Tibial artery (tissue), 4 donors: ENCODE measurements at regions of chr11 and their contacts with region 1.

Region 1: DNA sequence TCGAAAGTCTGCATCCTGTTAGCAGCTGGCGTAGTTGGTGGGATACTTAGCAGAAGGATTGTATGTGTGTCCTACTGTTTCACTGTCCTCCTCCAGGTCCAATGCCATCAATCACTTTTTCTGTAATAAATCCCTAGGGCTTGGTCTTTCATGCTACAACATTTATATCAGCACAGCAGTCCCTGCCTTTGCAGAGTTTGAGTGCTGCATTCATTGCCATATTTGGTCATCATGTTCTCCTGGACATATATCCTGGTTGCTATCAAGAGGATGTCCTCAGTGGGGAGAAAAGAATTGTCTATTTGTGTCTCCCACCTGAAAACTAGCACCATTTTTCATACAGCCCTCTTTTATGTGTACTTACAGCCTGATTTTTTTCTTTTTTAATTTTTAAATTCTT is 67.0 kb downstream of the OR5AK2 start:
- DNase-seq: no peak
- H3K4me3 ChIP-seq: no peak overlapping the region
- H3K27ac ChIP-seq: no peak overlapping the region
- H3K4me1 ChIP-seq: no peaks in the 10 kb centered on the region
- H3K27me3 ChIP-seq: no peaks in the 10 kb centered on the region
- CTCF ChIP-seq: no peak

Region 2: GRCh38 chr11:57116654-57117053 is 60.9 kb after region 1 on chr11:
- intact Hi-C with region 1: loop called (anchors 10 kb)
- DNase-seq: peak in 1 of 2 donors; percentile 28
- H3K4me3 ChIP-seq: no peak overlapping the region
- H3K27ac ChIP-seq: no peak overlapping the region
- H3K4me1 ChIP-seq: no peaks in the 10 kb centered on the region
- H3K27me3 ChIP-seq: no peaks in the 10 kb centered on the region
- CTCF ChIP-seq: peak; percentile 22 to 43

Region 3: GRCh38 chr11:57269571-57270021 is 213.8 kb after region 1 on chr11:
- intact Hi-C with region 1: no loop called
- DNase-seq: no peak
- H3K4me3 ChIP-seq: no peak overlapping the region
- H3K27ac ChIP-seq: no peak overlapping the region
- H3K4me1 ChIP-seq: no peaks in the 10 kb centered on the region
- H3K27me3 ChIP-seq: peaks cover 0 to 3% of the 10 kb centered on the region in 2 donors
- CTCF ChIP-seq: no peak